ENCODE measurements at regions of chr11 and their contacts with region 1.

Region 1: DNA sequence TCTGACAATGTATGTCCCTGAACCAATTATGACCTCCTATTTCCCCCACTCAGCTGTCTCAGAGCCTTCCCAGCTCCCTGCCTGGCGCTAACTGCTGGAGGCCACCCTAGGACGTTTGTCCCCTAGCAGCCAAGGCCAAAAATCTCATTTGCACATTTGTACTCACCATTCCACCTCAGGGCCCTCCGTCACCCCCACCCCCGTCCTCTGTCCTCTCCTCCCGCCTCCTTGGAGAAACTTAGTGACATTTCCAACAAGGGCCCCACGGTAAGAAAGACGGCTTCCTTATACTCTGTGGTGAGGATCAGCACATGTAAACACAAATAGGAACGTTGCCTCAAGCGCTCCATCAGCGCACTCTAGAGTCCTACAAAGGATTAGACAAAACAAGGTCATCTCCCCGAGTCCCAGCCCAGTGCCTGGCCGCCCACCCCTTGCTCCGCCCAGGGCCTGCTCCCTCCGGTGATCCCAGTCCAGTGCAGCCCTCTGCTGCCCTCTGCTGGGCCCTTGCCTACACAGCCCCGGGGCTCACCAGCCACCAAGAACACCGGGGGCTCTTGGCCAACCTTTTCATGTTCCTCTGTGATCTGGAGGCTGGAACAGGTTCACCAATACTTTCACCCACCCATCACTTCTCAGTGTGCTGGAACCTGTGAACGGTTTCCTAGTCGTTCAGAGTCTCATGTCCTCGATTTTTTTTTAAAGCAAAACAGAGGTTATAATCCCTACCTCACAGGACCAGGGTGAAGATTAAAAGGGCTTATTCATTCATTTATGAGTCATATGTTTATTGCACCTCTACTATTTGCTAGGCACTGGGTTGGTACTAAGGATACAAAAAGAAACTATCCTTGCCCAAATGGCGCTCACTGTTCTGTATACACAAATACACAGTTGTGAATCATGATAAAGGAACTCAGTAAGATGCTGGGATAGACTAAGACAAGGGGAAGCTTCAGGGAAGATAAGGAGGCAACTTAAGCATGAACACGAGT is 15.3 kb upstream of the CTR9 start:
- DNase-seq: peak; percentile 92
- H3K4me3 ChIP-seq: no peak overlapping the region
- H3K27ac ChIP-seq: no peak overlapping the region
- H3K4me1 ChIP-seq: no peaks in the 10 kb centered on the region
- H3K27me3 ChIP-seq: no peaks in the 10 kb centered on the region
- CTCF ChIP-seq: peak; percentile 99

Region 2: DNA sequence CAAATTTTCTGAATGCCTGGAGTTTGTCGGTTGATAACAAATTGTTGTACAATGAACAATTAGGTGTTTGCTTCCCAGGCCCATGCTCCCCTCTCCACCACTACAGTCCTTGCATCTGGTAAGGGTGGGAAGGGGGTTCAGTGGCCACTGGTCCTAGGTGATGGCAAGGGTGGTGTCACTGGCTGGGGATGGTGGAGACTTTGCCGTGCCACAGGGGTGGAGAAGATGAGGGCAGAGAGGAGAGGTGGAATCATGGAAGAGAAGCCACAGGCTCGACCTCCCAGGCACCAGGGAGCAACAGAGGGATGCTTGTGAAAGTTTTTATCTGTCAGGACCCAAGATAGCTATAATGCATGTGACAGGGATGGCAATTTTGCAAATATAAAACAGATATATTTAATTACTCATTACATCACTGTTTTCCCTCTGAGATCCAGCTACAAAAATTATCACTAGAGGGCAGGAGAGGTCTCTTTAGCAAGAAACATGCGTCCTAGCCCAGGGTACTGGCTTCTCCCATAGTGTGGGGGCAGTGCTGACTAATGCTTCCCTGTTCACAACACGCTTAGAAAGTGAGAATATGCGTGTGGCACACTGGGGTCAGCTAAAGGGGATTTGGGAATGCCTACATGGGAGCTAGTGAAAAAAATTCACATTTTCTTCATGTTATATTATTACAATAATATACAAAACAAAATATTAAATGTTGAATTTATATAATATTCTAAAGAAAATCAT is 329.8 kb before region 1 on chr11:
- intact Hi-C with region 1: loop called (anchors 2 kb)
- DNase-seq: peak; percentile 58
- H3K4me3 ChIP-seq: no peak overlapping the region
- H3K27ac ChIP-seq: no peak overlapping the region
- H3K4me1 ChIP-seq: no peaks in the 10 kb centered on the region
- H3K27me3 ChIP-seq: no peaks in the 10 kb centered on the region
- CTCF ChIP-seq: peak; percentile 60

Measured in colonic mucosa (tissue), 4 donors.